T-cell (primary cell): ENCODE measurements at regions of chr2 and their contacts with region 1.

Region 1: GRCh38 chr2:210195101-210195852 is 24.1 kb upstream of the KANSL1L start:
- DNase-seq: peak in 1 of 35 experiments; percentile 72
- ATAC-seq: peak in 2 of 4 experiments; percentile 43 to 53
- H3K4me3 ChIP-seq: no peak overlapping the region
- H3K4me3 Mint-ChIP-seq: no peak overlapping the region
- H3K27ac ChIP-seq: no peak overlapping the region
- H3K27ac Mint-ChIP-seq: no peak overlapping the region
- H3K4me1 ChIP-seq: no peaks in the 10 kb centered on the region
- H3K4me1 Mint-ChIP-seq: peaks cover 0 to 2% (median 0%) of the 10 kb centered on the region in 3 donors
- H3K27me3 ChIP-seq: no peaks in the 10 kb centered on the region
- H3K27me3 Mint-ChIP-seq: no peaks in the 10 kb centered on the region

Region 2: GRCh38 chr2:209977386-209978239 is 217.7 kb before region 1 on chr2:
- CTCF ChIA-PET with region 1: interaction called, 31 to 56 read pairs
- POLR2A ChIA-PET with region 1: no interaction called
- DNase-seq: peak in 1 of 35 experiments; percentile 70
- ATAC-seq: peak in 1 of 4 experiments; percentile 51
- H3K4me3 ChIP-seq: no peak overlapping the region
- H3K4me3 Mint-ChIP-seq: no peak overlapping the region
- H3K27ac ChIP-seq: no peak overlapping the region
- H3K27ac Mint-ChIP-seq: no peak overlapping the region
- H3K4me1 ChIP-seq: no peaks in the 10 kb centered on the region
- H3K4me1 Mint-ChIP-seq: no peaks in the 10 kb centered on the region
- H3K27me3 ChIP-seq: peaks cover 0 to 4% of the 10 kb centered on the region in 2 experiments
- H3K27me3 Mint-ChIP-seq: peaks cover 5 to 12% of the 10 kb centered on the region in 2 donors